Activated B cell treated with CpG ODN at 0.5 μM for 24 hours (primary cell): ENCODE measurements at regions of chr20 and their contacts with region 1.

Region 1: GRCh38 chr20:21395666-21396598 is 1.4 kb downstream of the NKX2-4 start:
- DNase-seq: peak; percentile 31
- ATAC-seq: peak; percentile 7
- H3K4me3 Mint-ChIP-seq: peak overlapping the region; percentile 61
- H3K27ac Mint-ChIP-seq: no peak overlapping the region
- H3K4me1 Mint-ChIP-seq: peaks cover 16% of the 10 kb centered on the region
- H3K27me3 Mint-ChIP-seq: peaks cover 63% of the 10 kb centered on the region
- CTCF ChIP-seq: no peak

Region 2: GRCh38 chr20:20369250-20370093 is 1026.5 kb before region 1 on chr20:
- CTCF ChIA-PET with region 1: no interaction called
- POLR2A ChIA-PET with region 1: no interaction called
- intact Hi-C with region 1: loop called (anchors 5 kb)
- DNase-seq: peak; percentile 27
- ATAC-seq: no peak
- H3K4me3 Mint-ChIP-seq: peak overlapping the region; percentile 67
- H3K27ac Mint-ChIP-seq: no peak overlapping the region
- H3K4me1 Mint-ChIP-seq: peaks cover 19% of the 10 kb centered on the region
- H3K27me3 Mint-ChIP-seq: peaks cover 48% of the 10 kb centered on the region
- CTCF ChIP-seq: no peak

Region 3: DNA sequence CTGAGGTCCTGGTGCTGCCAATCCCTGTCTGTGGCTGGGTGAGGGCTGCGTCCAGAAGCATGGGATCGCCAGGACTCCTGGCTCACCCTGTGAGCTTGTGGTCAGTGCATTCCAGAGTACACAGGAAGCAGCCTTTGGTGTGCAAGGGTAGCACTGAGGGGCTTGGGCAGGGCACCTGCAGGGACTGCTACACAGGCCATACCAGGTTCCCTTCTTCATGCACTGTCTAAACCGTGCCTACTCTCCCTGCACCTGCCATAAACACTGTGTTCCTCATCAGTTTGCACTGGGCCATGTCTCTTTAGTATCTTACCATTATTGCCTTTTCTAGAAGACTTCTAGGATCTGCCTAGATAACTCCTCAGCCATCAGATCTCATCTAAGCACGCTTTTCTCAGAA is 190.8 kb after region 1 on chr20:
- CTCF ChIA-PET with region 1: no interaction called
- POLR2A ChIA-PET with region 1: no interaction called
- intact Hi-C with region 1: no loop called
- DNase-seq: no peak
- ATAC-seq: no peak
- H3K4me3 Mint-ChIP-seq: no peak overlapping the region
- H3K27ac Mint-ChIP-seq: no peak overlapping the region
- H3K4me1 Mint-ChIP-seq: no peaks in the 10 kb centered on the region
- H3K27me3 Mint-ChIP-seq: peaks cover 7% of the 10 kb centered on the region
- CTCF ChIP-seq: no peak